Left cardiac atrium (tissue), 4 donors: ENCODE measurements at regions of chr2 and their contacts with region 1.

Region 1: GRCh38 chr2:99489761-99490622 is at the start of gene REV1:
- DNase-seq: peak; percentile 95
- ATAC-seq: peak; percentile 94 to 96
- total RNA-seq, gene REV1: 31.1 to 31.4 TPM

Region 2: DNA sequence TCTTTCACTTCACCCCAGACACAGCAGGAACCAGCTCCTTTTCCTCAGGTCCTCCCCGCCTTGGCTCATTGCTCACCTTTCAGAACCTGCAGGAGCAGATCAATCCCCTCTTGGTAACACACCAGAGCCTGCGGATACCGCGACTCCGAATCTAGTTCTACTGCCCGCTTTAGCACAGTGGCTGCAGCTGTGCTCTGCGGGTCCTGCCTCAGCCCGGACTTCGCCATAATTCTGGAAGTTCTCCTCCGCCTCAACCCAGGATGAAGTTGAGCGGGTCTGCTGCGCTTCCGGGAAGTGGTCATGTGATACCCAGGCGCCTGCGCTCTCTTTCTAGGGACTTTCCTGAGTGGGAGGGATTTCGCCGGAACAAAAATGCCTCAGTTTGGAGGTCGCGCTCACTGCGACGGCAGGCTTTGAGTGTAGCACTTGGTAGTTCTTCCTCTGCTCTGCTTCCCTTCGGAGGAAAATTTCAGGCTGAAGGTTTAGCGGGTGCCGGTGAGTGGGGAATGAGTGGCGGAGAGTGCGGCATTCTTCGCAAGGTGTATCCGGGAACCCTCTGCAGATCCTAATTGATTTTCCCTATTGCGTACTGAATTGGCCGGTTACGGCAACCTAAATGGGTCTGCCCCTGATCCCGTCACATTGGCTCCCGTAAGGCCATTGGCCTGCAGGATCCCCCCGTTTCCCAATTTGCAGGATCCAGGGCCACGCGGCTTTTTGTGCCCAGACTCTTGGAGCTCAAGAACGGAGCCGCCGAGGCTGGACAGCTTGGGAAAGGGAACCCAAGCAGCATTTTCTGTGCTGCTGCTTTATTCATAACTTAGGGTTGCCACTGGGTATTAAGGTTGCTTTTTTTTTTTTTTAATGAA is 309.0 kb before region 1 on chr2 and contains the starts of genes MITD1 and MRPL30:
- intact Hi-C with region 1: loop called in 1 of 2 experiments (anchors 5 kb)
- DNase-seq: peak; percentile 92
- ATAC-seq: peak; percentile 99
- total RNA-seq, gene MITD1: 16.2 to 17.6 TPM
- total RNA-seq, gene MRPL30: 25.4 to 25.8 TPM

Region 3: DNA sequence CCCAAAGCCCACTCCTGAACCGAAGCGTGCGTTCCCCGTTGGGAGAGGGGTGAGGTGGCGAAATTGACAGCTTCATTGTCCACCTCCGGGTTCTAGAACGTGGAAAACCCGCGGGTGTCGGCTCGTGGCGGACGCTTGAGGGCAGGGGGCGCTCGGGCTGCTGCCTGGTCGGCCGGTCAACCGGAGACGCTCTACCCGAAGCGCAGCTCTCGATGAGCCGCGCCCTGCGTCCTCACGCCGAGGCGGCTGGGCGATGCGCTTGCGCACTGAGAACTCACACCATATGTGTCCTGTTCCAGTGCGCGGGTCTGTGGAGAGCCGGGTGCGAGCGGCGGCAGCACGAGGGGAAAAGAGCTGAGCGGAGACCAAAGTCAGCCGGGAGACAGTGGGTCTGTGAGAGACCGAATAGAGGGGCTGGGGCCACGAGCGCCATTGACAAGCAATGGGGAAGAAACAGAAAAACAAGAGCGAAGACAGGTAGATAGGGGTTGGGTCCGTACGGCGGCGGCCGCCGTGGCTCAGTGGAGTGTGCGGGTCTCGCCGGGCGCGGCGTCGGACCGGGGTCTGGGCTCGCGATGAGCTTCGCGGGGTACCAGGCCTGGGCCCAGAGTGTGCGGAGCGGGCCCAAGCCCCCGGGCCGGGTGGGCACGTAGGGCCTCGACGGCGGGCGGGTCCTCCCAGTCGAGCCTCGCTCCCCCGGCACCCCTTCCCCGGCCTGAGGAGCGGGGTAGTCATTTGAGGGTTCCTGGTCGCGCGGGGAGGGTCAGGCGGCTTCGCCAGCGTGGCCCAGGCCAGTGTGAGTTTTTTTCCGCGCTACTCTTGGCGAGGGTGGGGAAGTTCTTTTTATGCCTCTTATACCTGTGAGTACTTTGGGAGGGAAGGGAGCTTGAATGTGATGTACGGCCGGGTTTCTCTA is 152.6 kb before region 1 on chr2 and contains the start of gene EIF5B:
- intact Hi-C with region 1: loop called (anchors 2 to 10 kb)
- DNase-seq: peak; percentile 98
- ATAC-seq: peak; percentile 94 to 95
- total RNA-seq, gene EIF5B: 51.7 to 66.9 TPM

Region 4: DNA sequence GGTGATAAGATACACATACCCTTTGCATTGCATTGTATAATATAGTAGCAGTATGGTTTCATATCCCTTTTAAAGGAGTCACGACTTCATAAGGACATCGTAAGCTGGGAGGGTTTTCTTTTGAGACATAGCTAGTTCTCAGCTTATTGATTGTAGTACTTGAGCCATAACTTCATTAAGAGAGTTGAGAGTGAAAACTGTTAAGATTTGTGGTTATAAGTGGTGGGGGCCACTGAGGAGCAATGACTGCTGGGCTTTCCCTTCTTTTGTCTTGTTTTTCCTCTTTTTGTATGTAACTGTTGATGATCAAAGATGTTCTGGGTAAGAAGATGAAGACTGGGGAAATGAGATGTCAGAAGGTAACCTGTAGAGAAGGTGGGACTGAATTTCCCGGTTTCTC is 141.8 kb before region 1 on chr2:
- intact Hi-C with region 1: loop called in 1 of 2 experiments (anchors 10 kb)
- DNase-seq: no peak
- ATAC-seq: no peak

Region 5: GRCh38 chr2:99442837-99443236 is 47.2 kb before region 1 on chr2:
- intact Hi-C with region 1: loop called (anchors 2 to 5 kb)
- DNase-seq: no peak
- ATAC-seq: peak; percentile 62 to 72

Region 6: DNA sequence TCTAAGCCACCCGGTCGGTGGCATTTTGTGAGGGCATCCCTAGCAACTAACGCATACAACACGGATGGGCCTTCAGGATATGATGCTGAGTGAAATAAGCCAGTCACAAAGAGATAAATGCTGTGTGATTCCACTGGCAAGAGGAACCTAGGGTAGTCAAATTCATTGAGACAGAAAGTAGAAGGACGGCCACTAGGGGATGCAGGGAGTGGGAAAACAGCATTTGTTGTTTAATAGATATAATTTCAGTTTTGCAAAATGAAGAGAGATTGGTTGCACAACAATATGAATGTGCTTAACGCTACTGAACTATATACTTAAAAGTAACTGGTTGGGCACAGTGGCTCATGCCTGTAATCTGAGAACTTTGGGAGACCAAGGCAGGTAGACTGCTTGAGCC is 539.5 kb after region 1 on chr2:
- intact Hi-C with region 1: no loop called
- DNase-seq: no peak
- ATAC-seq: no peak